CD8-positive, alpha-beta T cell (primary cell): ENCODE measurements at regions of chr1 and their contacts with region 1.

Region 1: GRCh38 chr1:241531195-241532161 is 700 bp upstream of the KMO start:
- DNase-seq: peak in 2 of 9 experiments; percentile 67 to 79
- ATAC-seq: peak; percentile 88
- H3K4me3 ChIP-seq: peak overlapping the region; percentile 52 to 63
- H3K4me3 Mint-ChIP-seq: peak overlapping the region; percentile 93
- H3K27ac ChIP-seq: peak overlapping the region; percentile 4 to 11
- H3K27ac Mint-ChIP-seq: peak overlapping the region; percentile 77
- H3K4me1 ChIP-seq: peaks cover 4% of the 10 kb centered on the region
- H3K4me1 Mint-ChIP-seq: peaks cover 14% of the 10 kb centered on the region
- H3K27me3 ChIP-seq: peaks cover 0 to 2% of the 10 kb centered on the region in 2 experiments
- H3K27me3 Mint-ChIP-seq: no peaks in the 10 kb centered on the region
- CTCF ChIP-seq: peak; percentile 77

Region 2: DNA sequence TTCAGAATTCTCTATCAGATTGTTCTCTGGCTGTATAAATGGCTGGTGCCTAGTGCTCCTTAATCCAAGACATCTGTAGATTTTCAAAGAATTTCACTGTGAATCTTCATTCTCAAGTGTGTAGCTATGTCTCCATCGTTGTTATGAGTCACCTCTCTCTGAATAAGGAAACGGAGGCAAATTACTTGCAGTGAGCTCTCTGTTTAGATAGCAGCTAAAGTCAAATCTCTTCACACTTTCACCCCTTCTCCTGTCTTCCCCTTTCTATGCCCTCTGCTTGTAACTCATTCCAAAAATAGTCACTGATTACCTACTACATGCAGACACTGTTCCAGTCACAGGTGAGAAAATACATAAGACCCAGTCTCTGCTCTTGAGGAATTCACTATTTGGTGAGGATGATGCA is 69.0 kb after region 1 on chr1:
- CTCF ChIA-PET with region 1: no interaction called
- POLR2A ChIA-PET with region 1: interaction called, 5 read pairs
- intact Hi-C with region 1: loop called in 1 of 2 experiments (anchors 5 kb)
- DNase-seq: no peak
- ATAC-seq: no peak
- H3K4me3 ChIP-seq: no peak overlapping the region
- H3K4me3 Mint-ChIP-seq: no peak overlapping the region
- H3K27ac ChIP-seq: no peak overlapping the region
- H3K27ac Mint-ChIP-seq: no peak overlapping the region
- H3K4me1 ChIP-seq: no peaks in the 10 kb centered on the region
- H3K4me1 Mint-ChIP-seq: no peaks in the 10 kb centered on the region
- H3K27me3 ChIP-seq: no peaks in the 10 kb centered on the region
- H3K27me3 Mint-ChIP-seq: no peaks in the 10 kb centered on the region
- CTCF ChIP-seq: no peak

Region 3: DNA sequence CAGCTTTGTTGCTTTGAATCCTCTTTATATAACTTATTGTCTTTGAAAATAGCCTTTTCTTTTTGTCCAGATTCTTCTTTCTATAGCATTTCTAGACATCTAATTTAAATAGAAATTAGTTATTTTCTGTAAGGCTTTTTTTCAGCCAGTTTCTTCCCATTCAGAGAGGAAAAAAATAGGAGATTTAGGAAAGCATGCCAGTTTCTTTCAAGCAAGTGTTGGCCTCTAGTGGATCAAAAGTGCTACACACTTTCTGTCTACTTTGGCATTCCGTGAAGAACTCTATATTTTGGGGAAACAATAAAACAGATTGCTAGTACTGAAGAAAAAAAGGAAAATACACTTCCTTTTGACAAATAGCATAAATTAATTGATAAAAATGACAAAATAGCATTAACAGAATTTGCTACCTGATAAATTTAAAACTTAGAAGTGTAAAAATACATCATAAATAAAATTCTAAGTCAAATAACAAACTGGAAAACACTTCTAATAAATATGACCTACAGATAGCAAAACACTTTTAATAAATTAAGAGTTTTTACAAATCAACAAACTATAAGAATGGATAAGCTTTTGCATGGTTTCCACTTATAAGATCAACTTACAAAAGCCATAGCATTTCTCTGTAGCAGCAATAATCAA is 303.4 kb after region 1 on chr1:
- CTCF ChIA-PET with region 1: no interaction called
- POLR2A ChIA-PET with region 1: no interaction called
- intact Hi-C with region 1: loop called in 1 of 2 experiments (anchors 1 kb)
- DNase-seq: peak in 1 of 9 experiments; percentile 23
- ATAC-seq: no peak
- H3K4me3 ChIP-seq: no peak overlapping the region
- H3K4me3 Mint-ChIP-seq: no peak overlapping the region
- H3K27ac ChIP-seq: no peak overlapping the region
- H3K27ac Mint-ChIP-seq: no peak overlapping the region
- H3K4me1 ChIP-seq: no peaks in the 10 kb centered on the region
- H3K4me1 Mint-ChIP-seq: no peaks in the 10 kb centered on the region
- H3K27me3 ChIP-seq: no peaks in the 10 kb centered on the region
- H3K27me3 Mint-ChIP-seq: peaks cover 5% of the 10 kb centered on the region
- CTCF ChIP-seq: peak; percentile 45

Region 4: GRCh38 chr1:241998412-241998921 is 467.0 kb after region 1 on chr1:
- CTCF ChIA-PET with region 1: interaction called, 11 read pairs
- POLR2A ChIA-PET with region 1: no interaction called
- intact Hi-C with region 1: loop called in 1 of 2 experiments (anchors 5 kb)
- DNase-seq: peak; percentile 1 to 67 (median 37)
- ATAC-seq: no peak
- H3K4me3 ChIP-seq: peak overlapping the region in 1 of 2 experiments; percentile 13
- H3K4me3 Mint-ChIP-seq: peak overlapping the region; percentile 49
- H3K27ac ChIP-seq: no peak overlapping the region
- H3K27ac Mint-ChIP-seq: no peak overlapping the region
- H3K4me1 ChIP-seq: no peaks in the 10 kb centered on the region
- H3K4me1 Mint-ChIP-seq: no peaks in the 10 kb centered on the region
- H3K27me3 ChIP-seq: no peaks in the 10 kb centered on the region
- H3K27me3 Mint-ChIP-seq: peaks cover 12% of the 10 kb centered on the region
- CTCF ChIP-seq: peak; percentile 57

Region 5: GRCh38 chr1:243325305-243325890 is 1793.9 kb after region 1 on chr1:
- CTCF ChIA-PET with region 1: no interaction called
- POLR2A ChIA-PET with region 1: no interaction called
- intact Hi-C with region 1: loop called in 1 of 2 experiments (anchors 2 kb)
- DNase-seq: peak in 3 of 9 experiments; percentile 34 to 64 (median 55)
- ATAC-seq: peak; percentile 51
- H3K4me3 ChIP-seq: no peak overlapping the region
- H3K4me3 Mint-ChIP-seq: no peak overlapping the region
- H3K27ac ChIP-seq: no peak overlapping the region
- H3K27ac Mint-ChIP-seq: no peak overlapping the region
- H3K4me1 ChIP-seq: no peaks in the 10 kb centered on the region
- H3K4me1 Mint-ChIP-seq: no peaks in the 10 kb centered on the region
- H3K27me3 ChIP-seq: no peaks in the 10 kb centered on the region
- H3K27me3 Mint-ChIP-seq: no peaks in the 10 kb centered on the region
- CTCF ChIP-seq: peak; percentile 91